HCT116 (cell line): ENCODE measurements at regions of chr2 and their contacts with region 1.

Region 1: GRCh38 chr2:27032495-27033252 is at the start of gene TMEM214:
- DNase-seq: peak; percentile 71
- ATAC-seq: peak; percentile 97
- H3K4me3 ChIP-seq: peak within 1 kb of the TSS; percentile 97 to 98
- H3K27ac ChIP-seq: peak within 1 kb of the TSS; percentile 74
- H3K4me1 ChIP-seq: peaks cover 7 to 37% of the 10 kb centered on the region in 2 experiments; a peak in 3 of 4 replicates
- H3K27me3 ChIP-seq: no peaks in the 10 kb centered on the region
- CTCF ChIP-seq: no peak
- POLR2A ChIP-seq: peak; percentile 77
- RAD21 ChIP-seq: no peak
- total RNA-seq, gene TMEM214: 69.8 TPM

Region 2: GRCh38 chr2:27050281-27050995 is 17.8 kb after region 1 on chr2:
- CTCF ChIA-PET with region 1: no interaction called
- POLR2A ChIA-PET with region 1: interaction called, 3 read pairs
- RAD21 ChIA-PET with region 1: no interaction called
- intact Hi-C with region 1: loop called (anchors 1 kb)
- DNase-seq: peak; percentile 90
- ATAC-seq: peak; percentile 84
- H3K4me3 ChIP-seq: peak overlapping the region; percentile 44 to 94
- H3K27ac ChIP-seq: peak overlapping the region; percentile 69
- H3K4me1 ChIP-seq: peaks cover 11 to 25% of the 10 kb centered on the region in 2 experiments
- H3K27me3 ChIP-seq: no peaks in the 10 kb centered on the region
- CTCF ChIP-seq: peak in 2 of 3 experiments; percentile 30 to 51; a peak in 4 of 6 replicates
- POLR2A ChIP-seq: peak; percentile 71
- RAD21 ChIP-seq: no peak

Region 3: DNA sequence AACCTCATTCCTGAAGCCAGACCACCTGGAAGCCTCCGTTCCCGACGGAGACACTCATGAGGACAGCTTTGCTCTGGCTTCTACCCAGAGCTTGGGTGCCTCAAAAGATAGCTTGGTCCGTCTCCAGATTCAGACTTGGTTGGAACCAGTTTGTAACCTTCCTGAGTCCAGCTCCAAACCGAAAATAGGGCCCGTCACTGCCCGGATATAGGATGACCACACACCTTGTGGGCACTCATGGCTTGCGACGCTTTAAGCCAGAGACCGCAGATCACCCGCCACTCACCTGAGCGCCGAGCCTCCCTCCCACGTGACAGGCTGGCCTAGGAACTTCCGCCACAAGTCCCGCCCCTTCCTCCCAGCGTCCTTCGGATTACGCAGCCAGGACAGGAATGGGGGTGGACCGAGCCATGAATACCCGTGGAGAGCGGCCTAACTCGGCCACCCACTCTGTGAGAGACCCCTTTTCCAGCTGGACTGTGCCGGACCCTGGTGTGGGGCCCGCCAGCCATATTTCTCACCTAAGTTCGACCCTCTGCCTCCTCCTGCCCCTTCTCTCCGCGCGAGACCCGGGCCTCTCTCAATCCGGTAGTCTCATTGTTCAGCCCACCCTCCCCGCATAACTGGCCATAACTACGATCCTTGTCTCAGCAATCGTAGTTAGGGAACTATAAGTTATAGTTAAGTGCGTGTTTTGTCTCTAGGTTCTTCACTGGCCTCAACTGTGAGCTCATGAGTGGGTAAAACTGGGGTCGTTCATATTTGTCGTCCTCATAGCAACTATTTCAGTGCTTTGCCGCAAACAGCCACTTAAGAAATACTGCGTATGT is 290.3 kb after region 1 on chr2 and contains the start of gene MPV17:
- CTCF ChIA-PET with region 1: no interaction called
- POLR2A ChIA-PET with region 1: no interaction called
- RAD21 ChIA-PET with region 1: no interaction called
- intact Hi-C with region 1: no loop called
- DNase-seq: peak; percentile 88
- ATAC-seq: peak; percentile 82
- H3K4me3 ChIP-seq: peak within 1 kb of the TSS; percentile 85 to 90
- H3K27ac ChIP-seq: peak within 1 kb of the TSS; percentile 90
- H3K4me1 ChIP-seq: peaks cover 24 to 40% of the 10 kb centered on the region in 2 experiments
- H3K27me3 ChIP-seq: no peaks in the 10 kb centered on the region
- CTCF ChIP-seq: no peak
- POLR2A ChIP-seq: peak; percentile 84
- RAD21 ChIP-seq: no peak
- total RNA-seq, gene MPV17: 55.4 TPM